ENCODE measurements at regions of chr3 and their contacts with region 1.

Region 1: DNA sequence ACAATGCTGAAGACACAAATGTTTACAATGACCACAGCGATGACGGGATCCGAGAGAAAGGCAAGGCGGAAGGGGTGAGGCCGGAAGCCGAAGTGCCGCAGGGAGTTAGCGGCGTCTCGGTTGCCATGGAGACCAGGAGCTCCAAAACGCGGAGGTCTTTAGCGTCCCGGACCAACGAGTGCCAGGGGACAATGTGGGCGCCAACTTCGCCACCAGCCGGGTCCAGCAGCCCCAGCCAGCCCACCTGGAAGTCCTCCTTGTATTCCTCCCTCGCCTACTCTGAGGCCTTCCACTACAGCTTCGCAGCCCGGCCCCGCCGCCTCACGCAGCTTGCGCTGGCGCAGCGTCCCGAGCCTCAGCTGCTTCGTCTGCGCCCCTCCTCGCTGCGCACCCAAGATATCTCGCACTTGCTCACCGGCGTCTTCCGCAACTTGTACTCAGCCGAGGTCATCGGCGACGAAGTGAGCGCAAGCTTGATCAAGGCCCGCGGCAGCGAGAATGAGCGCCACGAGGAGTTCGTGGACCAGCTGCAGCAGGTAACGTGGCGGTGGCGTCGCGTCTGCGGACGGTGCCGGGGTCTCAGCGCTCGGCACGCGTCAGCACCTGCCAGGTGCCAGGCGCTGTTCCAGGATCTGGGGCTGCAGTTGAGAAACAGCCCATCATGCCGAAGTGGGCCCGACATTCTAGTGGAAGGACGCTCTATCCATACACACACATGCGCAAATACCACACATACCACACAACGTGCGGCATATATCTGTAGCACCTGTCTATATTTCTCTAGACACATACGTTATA is at the start of gene DLEC1:
- DNase-seq: peak; percentile 68 to 94
- ATAC-seq: peak; percentile 68 to 79 (median 71)
- H3K4me3 ChIP-seq: peak within 1 kb of the TSS; percentile 52
- H3K4me3 Mint-ChIP-seq: peak within 1 kb of the TSS; percentile 84
- H3K27ac ChIP-seq: peak within 1 kb of the TSS; percentile 91
- H3K27ac Mint-ChIP-seq: peak within 1 kb of the TSS; percentile 85 to 95
- H3K4me1 ChIP-seq: peaks cover 31% of the 10 kb centered on the region
- H3K4me1 Mint-ChIP-seq: peaks cover 32% of the 10 kb centered on the region in 2 donors
- H3K27me3 ChIP-seq: no peaks in the 10 kb centered on the region
- H3K27me3 Mint-ChIP-seq: peaks cover 0 to 5% of the 10 kb centered on the region in 2 donors
- CTCF ChIP-seq: no peak
- total RNA-seq, gene DLEC1: 6.1 to 7.5 (median 7.0) TPM

Region 2: DNA sequence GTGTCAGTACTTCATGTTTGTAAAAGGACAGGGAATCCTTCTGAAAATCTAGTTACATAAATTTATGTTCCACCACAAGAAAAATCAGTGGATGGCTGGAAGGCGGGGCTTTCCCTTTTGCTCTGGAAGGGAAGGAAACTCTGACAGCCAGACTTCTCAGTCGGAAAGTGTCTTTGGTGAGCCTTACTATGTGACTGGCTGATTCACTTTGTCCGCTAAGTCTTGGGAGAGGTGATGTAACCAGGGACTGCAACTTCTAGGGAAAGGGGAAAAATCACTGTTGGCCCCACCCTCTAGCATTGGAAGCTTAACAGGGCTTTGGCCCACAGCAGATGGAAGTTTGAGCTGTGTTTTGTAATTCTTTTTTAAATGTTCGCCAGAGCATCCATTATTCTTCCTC is 459.1 kb before region 1 on chr3:
- intact Hi-C with region 1: no loop called
- DNase-seq: no peak
- ATAC-seq: no peak
- H3K4me3 ChIP-seq: no peak overlapping the region
- H3K4me3 Mint-ChIP-seq: no peak overlapping the region
- H3K27ac ChIP-seq: no peak overlapping the region
- H3K27ac Mint-ChIP-seq: no peak overlapping the region
- H3K4me1 ChIP-seq: no peaks in the 10 kb centered on the region
- H3K4me1 Mint-ChIP-seq: no peaks in the 10 kb centered on the region
- H3K27me3 ChIP-seq: no peaks in the 10 kb centered on the region
- H3K27me3 Mint-ChIP-seq: peaks cover 0 to 4% of the 10 kb centered on the region in 2 donors
- CTCF ChIP-seq: no peak

Region 3: GRCh38 chr3:37974121-37975083 is 64.9 kb before region 1 on chr3:
- intact Hi-C with region 1: loop called (anchors 1 kb)
- DNase-seq: peak; percentile 57 to 86
- ATAC-seq: peak; percentile 89 to 99 (median 99)
- H3K4me3 ChIP-seq: no peak overlapping the region
- H3K4me3 Mint-ChIP-seq: no peak overlapping the region
- H3K27ac ChIP-seq: no peak overlapping the region
- H3K27ac Mint-ChIP-seq: no peak overlapping the region
- H3K4me1 ChIP-seq: peaks cover 5% of the 10 kb centered on the region
- H3K4me1 Mint-ChIP-seq: peaks cover 0 to 6% of the 10 kb centered on the region in 2 donors
- H3K27me3 ChIP-seq: no peaks in the 10 kb centered on the region
- H3K27me3 Mint-ChIP-seq: no peaks in the 10 kb centered on the region
- CTCF ChIP-seq: peak; percentile 85

Region 4: DNA sequence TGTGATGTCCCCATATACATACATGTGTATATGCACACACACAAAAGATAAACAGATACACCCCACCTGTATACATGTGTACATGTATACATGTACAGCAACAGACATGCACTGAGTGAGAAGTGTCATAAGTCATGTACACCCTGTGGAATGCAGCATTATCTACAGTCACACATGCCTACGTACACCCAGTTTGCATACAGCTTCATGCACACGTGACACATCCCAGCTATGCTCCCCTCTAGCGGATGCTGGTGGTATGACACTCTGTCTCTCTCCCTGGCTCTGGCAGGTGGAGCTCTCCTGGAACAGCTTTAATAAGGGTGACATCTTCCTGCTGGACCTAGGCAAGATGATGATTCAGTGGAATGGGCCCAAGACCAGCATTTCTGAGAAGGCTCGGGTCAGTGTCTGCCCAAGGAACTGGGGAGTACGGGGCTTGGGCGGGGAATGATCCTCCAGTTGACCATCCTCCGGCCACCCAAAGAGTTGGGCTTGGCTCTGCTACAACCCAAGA is 42.5 kb before region 1 on chr3:
- intact Hi-C with region 1: loop called (anchors 2 kb)
- DNase-seq: peak; percentile 74 to 92
- ATAC-seq: peak; percentile 62 to 82 (median 70)
- H3K4me3 ChIP-seq: no peak overlapping the region
- H3K4me3 Mint-ChIP-seq: peak overlapping the region; percentile 67
- H3K27ac ChIP-seq: no peak overlapping the region
- H3K27ac Mint-ChIP-seq: peak overlapping the region; percentile 71 to 96
- H3K4me1 ChIP-seq: peaks cover 44% of the 10 kb centered on the region
- H3K4me1 Mint-ChIP-seq: peaks cover 46 to 60% of the 10 kb centered on the region in 2 donors
- H3K27me3 ChIP-seq: no peaks in the 10 kb centered on the region
- H3K27me3 Mint-ChIP-seq: no peaks in the 10 kb centered on the region
- CTCF ChIP-seq: peak; percentile 91

Region 5: DNA sequence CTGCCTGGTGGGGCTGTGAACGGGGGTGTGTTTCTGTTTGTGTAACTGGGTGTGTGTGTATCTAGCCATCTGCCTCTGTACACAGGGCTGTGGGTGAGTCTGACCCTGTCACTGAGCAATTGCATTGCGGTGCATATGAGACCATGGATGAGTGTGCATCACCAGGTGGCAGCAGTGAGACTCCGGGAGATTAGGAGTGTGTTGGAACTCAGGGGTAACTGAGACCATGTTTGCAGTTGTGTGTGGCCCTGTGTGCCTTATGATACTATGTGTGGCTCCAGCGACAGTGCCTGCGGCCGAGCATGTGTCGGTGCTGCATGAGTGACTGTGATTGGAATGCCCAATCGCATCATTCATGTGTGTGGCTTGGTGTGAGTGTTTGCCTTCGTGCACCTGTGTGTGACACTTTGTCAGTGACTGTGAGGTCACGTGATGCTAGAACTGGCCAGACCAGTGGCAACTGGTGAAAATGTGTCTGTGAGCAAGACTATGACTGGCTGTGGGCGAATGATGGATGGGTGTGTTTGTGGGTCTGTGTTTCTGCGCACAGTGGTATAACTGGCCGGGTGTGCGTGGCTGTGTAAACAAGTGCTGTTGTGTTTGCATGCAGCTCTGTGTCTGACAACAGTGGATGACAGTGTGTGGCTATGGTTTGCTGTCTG is 34.8 kb before region 1 on chr3:
- intact Hi-C with region 1: loop called (anchors 1 kb)
- DNase-seq: peak in 1 of 2 donors; percentile 69
- ATAC-seq: peak; percentile 59 to 76 (median 66)
- H3K4me3 ChIP-seq: no peak overlapping the region
- H3K4me3 Mint-ChIP-seq: no peak overlapping the region
- H3K27ac ChIP-seq: no peak overlapping the region
- H3K27ac Mint-ChIP-seq: peak overlapping the region in 1 of 2 donors; percentile 79
- H3K4me1 ChIP-seq: no peaks in the 10 kb centered on the region
- H3K4me1 Mint-ChIP-seq: peaks cover 7 to 31% of the 10 kb centered on the region in 2 donors
- H3K27me3 ChIP-seq: no peaks in the 10 kb centered on the region
- H3K27me3 Mint-ChIP-seq: no peaks in the 10 kb centered on the region
- CTCF ChIP-seq: peak; percentile 35

Region 6: DNA sequence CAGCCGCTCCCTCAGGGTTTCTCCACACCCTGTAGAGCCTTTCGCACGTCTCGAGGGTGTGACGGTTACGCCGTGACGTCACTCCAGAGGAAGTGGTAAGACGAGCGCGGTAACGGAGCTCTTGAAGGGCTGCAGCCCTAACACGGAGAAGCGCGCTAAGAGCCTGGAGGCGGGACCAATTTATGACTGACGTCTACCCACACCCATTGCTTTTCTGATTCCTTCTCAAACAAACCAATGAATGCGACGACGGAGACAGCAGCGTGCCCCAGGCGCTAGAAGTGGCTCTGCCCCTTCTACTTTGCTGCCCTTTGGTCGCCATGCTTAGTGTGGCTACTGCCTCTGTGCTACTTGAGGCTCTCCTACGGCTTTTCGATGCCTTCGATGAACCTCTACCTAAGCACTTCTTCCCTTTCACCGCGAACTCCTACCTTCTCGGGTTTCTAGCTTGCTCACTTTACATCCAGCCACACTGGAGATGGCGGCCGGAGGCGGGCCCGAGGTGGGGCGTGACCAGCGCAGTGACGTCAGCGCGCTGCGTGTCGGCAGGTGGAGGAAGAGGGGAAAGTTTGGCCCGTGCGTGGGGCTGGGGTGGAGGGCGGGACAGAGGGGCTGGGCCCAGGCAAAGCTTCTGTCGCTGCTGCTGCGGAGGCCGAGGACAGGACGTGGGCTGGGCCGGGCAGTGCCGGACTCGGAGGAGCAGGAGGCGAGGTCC is 125.8 kb after region 1 on chr3 and contains the start of gene OXSR1:
- intact Hi-C with region 1: loop called (anchors 1 kb)
- DNase-seq: peak; percentile 97 to 100
- ATAC-seq: peak; percentile 86 to 96 (median 87)
- H3K4me3 ChIP-seq: peak within 1 kb of the TSS; percentile 94
- H3K4me3 Mint-ChIP-seq: peak within 1 kb of the TSS; percentile 95
- H3K27ac ChIP-seq: peak within 1 kb of the TSS; percentile 100
- H3K27ac Mint-ChIP-seq: peak within 1 kb of the TSS; percentile 99 to 100
- H3K4me1 ChIP-seq: peaks cover 17% of the 10 kb centered on the region
- H3K4me1 Mint-ChIP-seq: peaks cover 31 to 53% of the 10 kb centered on the region in 2 donors
- H3K27me3 ChIP-seq: no peaks in the 10 kb centered on the region
- H3K27me3 Mint-ChIP-seq: no peaks in the 10 kb centered on the region
- CTCF ChIP-seq: no peak
- total RNA-seq, gene OXSR1: 37.2 to 46.1 (median 44.0) TPM

Measured in natural killer cell (primary cell).